Panc1 (cell line): ENCODE measurements at regions of chr1 and their contacts with region 1.

Region 1: DNA sequence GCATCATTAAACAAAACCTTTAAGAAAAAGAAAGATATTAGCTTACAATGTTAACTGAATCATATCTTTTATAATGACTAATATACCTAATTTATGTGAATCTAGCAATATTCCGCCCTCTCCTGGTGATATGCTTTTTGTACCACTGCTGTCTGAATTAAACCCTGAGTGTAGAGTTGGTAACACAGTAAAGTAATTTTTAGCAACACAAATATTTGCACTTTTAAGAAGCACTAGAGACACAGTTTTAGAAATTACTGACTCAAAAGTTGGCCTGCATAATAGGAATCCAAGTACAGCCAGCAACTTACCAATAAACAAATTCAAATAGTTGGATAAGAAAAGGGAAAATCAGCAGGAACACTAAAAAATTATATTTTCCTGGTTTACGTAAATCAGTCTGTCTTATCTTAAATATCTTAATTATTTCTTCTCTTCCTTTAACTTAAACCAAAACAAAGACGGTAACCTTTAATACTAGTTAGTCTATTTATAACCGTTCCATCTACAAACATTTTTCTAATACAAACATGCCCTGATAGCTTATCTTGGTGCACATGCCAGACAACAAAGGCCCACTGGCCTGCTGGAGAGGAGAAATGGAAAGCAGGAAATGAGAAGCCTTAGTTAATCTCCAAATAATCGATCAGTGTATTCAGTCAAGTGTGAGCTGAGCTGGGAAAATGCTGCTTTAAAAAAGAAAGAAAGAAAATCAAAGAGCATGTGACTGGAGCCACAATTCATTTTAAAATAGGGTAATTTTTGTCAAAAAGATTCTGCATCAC is 246.0 kb downstream of the RERE start:
- DNase-seq: no peak
- ATAC-seq: no peak
- H3K4me3 ChIP-seq: no peak overlapping the region
- H3K27ac ChIP-seq: no peak overlapping the region
- H3K4me1 ChIP-seq: peaks cover 11% of the 10 kb centered on the region
- H3K27me3 ChIP-seq: no peaks in the 10 kb centered on the region
- CTCF ChIP-seq: peak; percentile 53; the same call in 1 of the 2 replicates

Region 2: GRCh38 chr1:8439015-8439702 is 132.2 kb before region 1 on chr1:
- CTCF ChIA-PET with region 1: no interaction called
- POLR2A ChIA-PET with region 1: no interaction called
- in situ Hi-C with region 1: no loop called
- intact Hi-C with region 1: no loop called
- DNase-seq: no peak
- ATAC-seq: peak; percentile 72
- H3K4me3 ChIP-seq: no peak overlapping the region
- H3K27ac ChIP-seq: peak overlapping the region; percentile 68
- H3K4me1 ChIP-seq: peaks cover 18% of the 10 kb centered on the region
- H3K27me3 ChIP-seq: no peaks in the 10 kb centered on the region
- CTCF ChIP-seq: peak; percentile 38

Region 3: DNA sequence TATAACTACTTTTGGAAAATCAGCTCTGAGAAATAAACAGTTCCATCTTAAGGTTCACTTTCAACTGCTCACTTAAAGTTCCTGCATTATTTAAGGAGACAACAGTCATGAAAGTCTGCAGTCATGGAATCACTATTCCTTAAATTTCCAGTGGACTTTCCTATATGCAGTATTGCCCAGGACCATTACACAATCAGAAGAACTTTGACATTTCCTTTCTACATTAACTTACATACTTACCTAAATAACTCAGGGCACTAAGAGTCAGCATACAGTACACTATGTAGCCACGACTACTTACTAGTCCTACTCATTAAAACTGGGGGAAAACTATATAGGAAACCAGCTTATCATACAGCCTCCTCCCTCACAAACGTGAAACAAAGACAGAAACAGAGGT is 33.4 kb before region 1 on chr1:
- CTCF ChIA-PET with region 1: no interaction called
- POLR2A ChIA-PET with region 1: interaction called, 3 read pairs
- in situ Hi-C with region 1: no loop called
- intact Hi-C with region 1: loop called (anchors 1 kb)
- DNase-seq: no peak
- ATAC-seq: no peak
- H3K4me3 ChIP-seq: no peak overlapping the region
- H3K27ac ChIP-seq: no peak overlapping the region
- H3K4me1 ChIP-seq: no peaks in the 10 kb centered on the region
- H3K27me3 ChIP-seq: no peaks in the 10 kb centered on the region
- CTCF ChIP-seq: no peak

Region 4: DNA sequence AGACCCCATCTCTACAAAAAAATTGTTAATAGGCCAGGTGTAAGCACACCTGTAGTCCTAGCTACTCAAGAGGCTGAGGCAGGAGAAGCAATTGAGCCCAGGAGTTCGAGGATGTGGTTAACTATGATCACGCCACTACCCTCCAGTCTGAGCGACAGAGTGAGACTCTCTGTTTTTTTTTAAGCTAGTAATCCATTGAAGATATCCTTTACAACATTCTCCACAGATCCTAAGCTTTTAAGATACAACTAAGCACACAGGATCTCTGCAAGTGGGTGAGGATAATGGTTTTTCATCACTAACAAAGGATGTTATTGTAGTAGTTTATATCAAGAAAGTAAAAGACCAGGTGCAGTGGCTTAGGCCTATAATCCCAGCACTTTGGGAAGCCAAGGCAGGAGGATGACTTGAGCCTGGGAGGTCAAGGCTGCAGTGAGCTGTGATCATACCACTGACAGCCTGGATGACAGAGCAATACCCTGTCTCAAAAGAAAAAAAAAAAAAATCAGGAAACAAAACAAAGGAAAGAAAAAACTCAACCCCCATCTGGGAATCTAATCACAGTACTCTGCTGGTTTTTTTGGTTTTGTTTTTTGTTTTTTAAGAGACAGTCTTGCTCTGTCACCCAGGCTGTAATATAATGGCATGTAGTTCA is 80.0 kb after region 1 on chr1:
- CTCF ChIA-PET with region 1: no interaction called
- POLR2A ChIA-PET with region 1: interaction called, 19 read pairs
- in situ Hi-C with region 1: no loop called
- intact Hi-C with region 1: no loop called
- DNase-seq: no peak
- ATAC-seq: no peak
- H3K4me3 ChIP-seq: no peak overlapping the region
- H3K27ac ChIP-seq: no peak overlapping the region
- H3K4me1 ChIP-seq: peaks cover 17% of the 10 kb centered on the region
- H3K27me3 ChIP-seq: no peaks in the 10 kb centered on the region
- CTCF ChIP-seq: no peak